MCF 10A (cell line): ENCODE measurements at regions of chr20 and their contacts with region 1.

Region 1: GRCh38 chr20:14235355-14235754 is 102.1 kb downstream of the FLRT3 start:
- DNase-seq: peak; percentile 60
- H3K4me3 Mint-ChIP-seq: peak overlapping the region; percentile 3
- H3K27ac Mint-ChIP-seq: peak overlapping the region; percentile 8
- H3K4me1 Mint-ChIP-seq: peaks cover 15% of the 10 kb centered on the region
- H3K27me3 Mint-ChIP-seq: no peaks in the 10 kb centered on the region
- CTCF ChIP-seq: no peak

Region 2: DNA sequence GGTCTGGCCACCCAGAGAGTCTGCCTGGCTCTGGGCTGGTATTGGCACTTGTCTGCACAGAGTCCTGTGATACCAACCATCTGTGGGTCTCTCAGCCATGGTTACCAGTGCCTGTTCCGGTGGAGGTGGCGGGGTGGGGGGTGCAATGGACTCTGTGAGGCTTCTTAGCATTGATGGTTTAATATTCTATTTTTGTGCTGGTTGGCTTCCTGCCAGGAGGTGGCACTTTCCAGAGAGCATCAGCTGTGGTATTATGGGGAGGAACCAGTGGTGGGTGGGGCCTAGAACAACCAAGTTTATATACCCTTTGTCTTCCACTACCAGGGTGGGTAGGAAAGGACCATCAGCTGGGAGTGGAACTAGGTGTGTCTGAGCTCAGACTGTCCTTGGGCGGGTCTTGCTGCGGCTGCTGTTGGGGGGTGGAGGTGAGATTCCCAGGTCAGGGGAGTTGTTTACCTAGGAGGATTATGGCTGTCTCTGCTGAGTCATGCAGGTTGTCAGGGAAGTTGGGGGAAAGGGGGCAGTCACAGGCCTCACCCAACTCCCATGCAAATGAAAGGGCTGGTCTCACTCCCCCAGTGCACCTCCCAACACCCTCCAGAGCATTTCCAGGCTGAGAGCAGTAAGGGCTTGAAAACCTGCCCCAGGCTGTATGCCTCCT is 15.4 kb before region 1 on chr20:
- CTCF ChIA-PET with region 1: interaction called, 5 read pairs
- POLR2A ChIA-PET with region 1: interaction called, 13 read pairs
- intact Hi-C with region 1: no loop called
- DNase-seq: peak; percentile 63
- H3K4me3 Mint-ChIP-seq: no peak overlapping the region
- H3K27ac Mint-ChIP-seq: peak overlapping the region; percentile 80
- H3K4me1 Mint-ChIP-seq: peaks cover 30% of the 10 kb centered on the region
- H3K27me3 Mint-ChIP-seq: no peaks in the 10 kb centered on the region
- CTCF ChIP-seq: no peak

Region 3: GRCh38 chr20:14288341-14289330 is 53.3 kb after region 1 on chr20:
- CTCF ChIA-PET with region 1: interaction called, 3 read pairs
- POLR2A ChIA-PET with region 1: interaction called, 11 read pairs
- intact Hi-C with region 1: loop called (anchors 5 kb)
- DNase-seq: peak; percentile 80
- H3K4me3 Mint-ChIP-seq: peak overlapping the region; percentile 20
- H3K27ac Mint-ChIP-seq: peak overlapping the region; percentile 98
- H3K4me1 Mint-ChIP-seq: peaks cover 45% of the 10 kb centered on the region
- H3K27me3 Mint-ChIP-seq: no peaks in the 10 kb centered on the region
- CTCF ChIP-seq: no peak